Psoas muscle (tissue), 8 donors: ENCODE measurements at regions of chr10 and their contacts with region 1.

Region 1: DNA sequence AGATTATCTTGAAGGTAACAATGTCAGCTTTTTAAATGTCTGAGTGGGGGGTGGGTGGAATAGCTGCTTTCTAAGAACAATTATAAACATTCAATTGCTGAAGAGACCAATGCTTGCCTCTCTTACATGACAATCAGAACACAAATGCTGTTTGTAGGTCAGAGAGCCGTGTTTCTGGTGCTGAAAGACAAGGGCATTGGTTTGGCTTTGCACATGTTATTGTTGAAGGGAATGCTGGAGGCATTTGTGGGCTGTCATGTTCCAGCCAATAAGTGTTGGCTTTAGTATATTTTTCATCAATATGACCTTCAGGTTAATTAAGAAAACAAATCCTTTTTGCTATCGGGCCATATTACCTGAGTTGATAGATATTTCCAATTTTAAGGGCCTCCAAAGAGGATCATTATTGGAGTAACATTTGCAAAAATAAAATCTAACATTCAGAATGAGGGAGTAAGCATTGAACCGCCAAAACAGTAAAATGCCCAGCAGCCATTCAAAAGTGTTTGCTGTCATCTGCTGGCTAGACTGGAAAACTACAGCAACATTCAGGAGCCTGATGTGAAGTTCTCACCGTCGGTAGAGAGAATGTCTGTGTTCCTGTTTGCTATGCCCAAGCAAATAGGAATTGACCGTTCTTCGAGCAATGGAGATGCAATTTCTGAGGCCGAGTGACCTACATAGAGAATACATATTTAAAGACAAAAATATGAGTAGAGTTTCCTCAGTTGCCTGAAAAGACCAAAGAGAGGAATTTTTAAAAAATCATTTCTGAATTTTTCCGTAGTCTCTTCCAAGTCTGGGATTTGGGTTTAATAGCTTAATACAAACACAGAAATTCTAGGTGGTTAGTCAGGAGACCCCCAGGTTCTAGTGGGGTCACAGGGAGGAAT is 118.9 kb downstream of the APBB1IP start:
- DNase-seq: no peak
- ATAC-seq: no peak
- H3K4me3 ChIP-seq: no peak overlapping the region
- H3K27ac ChIP-seq: no peak overlapping the region
- H3K4me1 ChIP-seq: no peaks in the 10 kb centered on the region
- H3K27me3 ChIP-seq: no peaks in the 10 kb centered on the region
- CTCF ChIP-seq: peak; percentile 46

Region 2: DNA sequence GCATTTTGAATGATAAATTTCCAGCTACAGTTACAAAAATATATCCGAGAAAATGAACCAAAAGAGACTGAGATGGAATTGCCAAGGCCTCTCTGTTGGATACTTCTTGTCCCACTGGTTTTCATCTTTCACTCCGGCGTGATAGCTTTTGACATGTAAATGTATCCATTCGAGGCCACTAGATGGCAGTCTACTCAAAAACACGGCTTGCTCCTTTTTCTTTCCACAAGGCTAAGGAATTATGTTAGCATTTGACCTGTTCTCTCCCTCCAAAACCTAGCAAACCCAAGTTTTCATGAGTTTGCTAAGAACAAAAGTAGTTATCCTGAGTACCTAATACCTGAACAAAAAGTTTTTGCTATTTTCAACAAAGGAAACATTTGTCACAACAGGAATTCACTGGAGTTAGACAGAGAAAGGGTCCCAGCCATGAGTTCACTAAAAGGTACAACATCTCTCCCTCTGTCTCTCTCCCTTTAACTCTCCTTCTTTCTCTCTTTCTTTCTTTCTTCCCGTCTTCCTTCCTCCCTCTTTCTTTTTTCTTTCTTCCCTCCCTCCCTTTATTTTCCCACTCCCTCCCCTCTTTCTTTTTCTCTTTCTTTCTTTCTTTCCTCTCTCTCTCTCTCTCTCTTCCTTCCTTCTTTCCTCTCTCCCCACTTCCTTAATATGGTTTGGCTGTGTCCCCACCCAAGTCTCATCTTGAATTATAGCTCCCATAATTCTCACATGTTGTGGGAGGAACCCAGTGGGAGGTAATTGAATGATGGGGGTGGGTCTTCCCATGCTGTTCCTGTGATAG is 830.9 kb before region 1 on chr10:
- intact Hi-C with region 1: loop called in 1 of 2 experiments (anchors 10 kb)
- DNase-seq: no peak
- ATAC-seq: no peak
- H3K4me3 ChIP-seq: no peak overlapping the region
- H3K27ac ChIP-seq: no peak overlapping the region
- H3K4me1 ChIP-seq: no peaks in the 10 kb centered on the region
- H3K27me3 ChIP-seq: no peaks in the 10 kb centered on the region
- CTCF ChIP-seq: peak; percentile 55

Region 3: DNA sequence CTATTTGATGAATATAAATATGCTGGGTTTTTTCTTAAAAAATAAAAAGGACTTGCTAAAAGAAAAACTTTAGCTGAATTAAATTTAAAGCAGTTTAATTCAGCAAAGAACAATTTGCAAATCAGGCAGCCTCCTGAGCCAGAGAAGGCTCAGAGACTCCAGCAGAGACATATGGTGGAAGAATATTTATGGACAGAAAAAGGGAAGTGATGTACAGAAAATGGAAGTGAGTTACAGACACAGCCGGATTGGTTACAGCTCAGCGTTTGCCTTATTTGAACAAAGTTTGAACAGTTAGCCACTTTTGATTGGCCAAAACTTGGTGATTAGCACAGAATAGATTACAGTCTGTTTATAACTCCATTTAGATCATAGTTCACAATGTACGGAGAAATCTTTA is 230.1 kb before region 1 on chr10:
- intact Hi-C with region 1: no loop called
- DNase-seq: no peak
- ATAC-seq: no peak
- H3K4me3 ChIP-seq: no peak overlapping the region
- H3K27ac ChIP-seq: no peak overlapping the region
- H3K4me1 ChIP-seq: no peaks in the 10 kb centered on the region
- H3K27me3 ChIP-seq: no peaks in the 10 kb centered on the region
- CTCF ChIP-seq: no peak